Activated CD4-positive, alpha-beta memory T cell treated with anti-CD3 and anti-CD28 coated beads for 36 hours (primary cell): ENCODE measurements at regions of chr15 and their contacts with region 1.

Region 1: GRCh38 chr15:99565299-99566156 is at the start of gene MEF2A:
- DNase-seq: peak; percentile 94
- H3K4me3 Mint-ChIP-seq: peak within 1 kb of the TSS; percentile 96
- H3K27ac Mint-ChIP-seq: peak within 1 kb of the TSS; percentile 97
- H3K4me1 Mint-ChIP-seq: peaks cover 16% of the 10 kb centered on the region
- H3K27me3 Mint-ChIP-seq: no peaks in the 10 kb centered on the region
- total RNA-seq, gene MEF2A: 15.9 to 19.5 TPM

Region 2: DNA sequence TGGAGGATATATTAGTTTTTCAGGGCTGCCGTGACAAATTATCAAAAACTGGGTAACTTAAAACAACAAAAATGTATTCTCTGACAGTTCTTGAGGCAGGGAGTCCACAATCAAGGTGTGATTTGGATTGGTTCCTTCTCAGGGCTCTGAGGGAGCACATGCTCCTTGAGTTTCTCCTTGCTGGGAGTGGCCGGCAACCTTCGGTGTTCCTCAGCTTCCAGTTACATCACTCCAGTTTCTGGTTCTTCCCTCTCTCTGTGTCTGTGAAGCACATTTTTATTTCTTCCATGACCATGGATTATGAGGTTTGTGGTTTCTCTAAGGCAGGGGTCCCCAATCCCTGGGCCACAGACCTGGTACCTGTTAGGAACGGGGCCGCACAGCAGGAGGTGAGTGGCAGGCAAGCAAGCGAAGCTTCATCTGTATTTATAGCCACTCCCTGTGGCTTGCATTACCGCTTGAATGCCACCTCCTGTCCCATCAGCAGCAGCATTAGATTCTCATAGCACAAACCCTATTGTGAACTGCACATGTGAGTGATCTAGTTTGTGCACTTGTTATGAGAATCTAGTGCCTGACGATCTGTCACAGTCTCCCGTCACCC is 289.9 kb before region 1 on chr15:
- CTCF ChIA-PET with region 1: interaction called, 8 read pairs
- POLR2A ChIA-PET with region 1: no interaction called
- intact Hi-C with region 1: loop called (anchors 5 kb)
- DNase-seq: no peak
- H3K4me3 Mint-ChIP-seq: no peak overlapping the region
- H3K27ac Mint-ChIP-seq: no peak overlapping the region
- H3K4me1 Mint-ChIP-seq: peaks cover 24% of the 10 kb centered on the region
- H3K27me3 Mint-ChIP-seq: no peaks in the 10 kb centered on the region

Region 3: DNA sequence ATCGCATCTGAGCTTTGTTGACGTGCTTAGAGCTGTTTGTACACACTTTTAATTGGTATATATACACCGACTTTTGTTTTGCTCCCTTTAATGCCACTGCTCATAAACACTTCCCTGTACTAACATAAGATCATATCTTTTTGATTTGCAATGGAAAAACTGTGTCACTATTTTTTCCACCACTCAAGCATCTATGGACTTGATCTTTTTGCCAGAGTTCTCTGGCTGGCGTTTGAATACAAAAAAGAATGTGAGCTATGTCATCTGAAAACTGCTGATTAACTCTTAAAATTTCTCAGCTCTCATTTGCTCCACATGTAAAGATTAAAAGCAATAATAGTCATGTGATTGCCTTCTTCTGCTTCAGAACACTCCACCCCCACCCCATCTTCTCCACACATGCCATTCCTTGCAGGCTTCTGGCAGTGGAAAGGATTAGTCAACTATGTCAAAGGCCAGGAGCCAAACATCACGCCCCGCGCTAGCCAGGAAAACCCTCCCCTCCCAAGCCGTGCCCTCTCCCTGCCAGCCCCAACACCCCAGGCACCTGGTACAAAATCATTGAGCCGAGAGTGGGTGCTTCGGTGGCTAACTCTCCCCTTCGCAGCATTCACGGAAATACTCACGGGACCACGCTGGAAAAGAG is 123.2 kb before region 1 on chr15:
- CTCF ChIA-PET with region 1: no interaction called
- POLR2A ChIA-PET with region 1: no interaction called
- intact Hi-C with region 1: loop called (anchors 5 kb)
- DNase-seq: no peak
- H3K4me3 Mint-ChIP-seq: no peak overlapping the region
- H3K27ac Mint-ChIP-seq: no peak overlapping the region
- H3K4me1 Mint-ChIP-seq: peaks cover 27% of the 10 kb centered on the region
- H3K27me3 Mint-ChIP-seq: no peaks in the 10 kb centered on the region

Region 4: GRCh38 chr15:99466701-99467337 is 98.7 kb before region 1 on chr15:
- CTCF ChIA-PET with region 1: no interaction called
- POLR2A ChIA-PET with region 1: no interaction called
- intact Hi-C with region 1: no loop called
- DNase-seq: no peak
- H3K4me3 Mint-ChIP-seq: no peak overlapping the region
- H3K27ac Mint-ChIP-seq: no peak overlapping the region
- H3K4me1 Mint-ChIP-seq: no peaks in the 10 kb centered on the region
- H3K27me3 Mint-ChIP-seq: no peaks in the 10 kb centered on the region

Region 5: GRCh38 chr15:99492716-99493115 is 72.8 kb before region 1 on chr15:
- CTCF ChIA-PET with region 1: no interaction called
- POLR2A ChIA-PET with region 1: no interaction called
- intact Hi-C with region 1: no loop called
- DNase-seq: no peak
- H3K4me3 Mint-ChIP-seq: no peak overlapping the region
- H3K27ac Mint-ChIP-seq: no peak overlapping the region
- H3K4me1 Mint-ChIP-seq: peaks cover 5% of the 10 kb centered on the region
- H3K27me3 Mint-ChIP-seq: peaks cover 4% of the 10 kb centered on the region

Region 6: DNA sequence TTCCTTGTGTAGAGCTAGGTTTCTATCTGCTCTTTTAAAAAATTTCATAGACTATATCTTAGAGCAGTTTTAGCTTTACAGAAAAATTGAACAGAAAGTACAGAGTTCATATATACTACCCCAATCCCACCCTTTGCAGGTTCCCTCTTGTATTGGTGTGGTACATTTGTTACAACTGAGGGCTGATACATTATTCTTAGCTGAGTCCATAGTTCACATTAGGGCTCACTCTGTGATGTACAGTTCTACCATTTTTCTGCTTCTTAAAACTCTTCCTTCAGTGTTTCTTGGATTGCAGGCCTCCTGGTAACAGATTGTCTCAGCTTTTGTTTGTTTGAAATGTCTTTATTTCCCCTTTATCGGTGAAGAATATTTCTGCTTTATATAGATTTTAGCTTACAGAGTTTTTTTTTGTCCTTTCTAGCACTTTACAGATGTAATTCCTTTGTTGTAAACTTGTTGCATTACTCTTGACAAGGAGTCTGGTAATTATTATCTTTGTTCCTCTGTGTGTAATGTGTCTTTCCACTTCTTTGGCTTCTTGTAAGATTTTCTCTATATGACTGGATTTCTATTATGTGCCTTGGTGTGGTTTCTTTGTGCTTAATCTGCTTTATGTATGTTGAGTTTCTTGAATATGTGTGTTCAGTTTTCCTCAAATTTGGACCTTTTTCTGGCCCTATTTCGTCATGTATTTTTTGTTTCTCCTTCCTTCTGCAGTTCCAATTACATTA is 25.6 kb after region 1 on chr15:
- CTCF ChIA-PET with region 1: interaction called, 3 read pairs
- POLR2A ChIA-PET with region 1: no interaction called
- intact Hi-C with region 1: loop called (anchors 2 kb)
- DNase-seq: no peak
- H3K4me3 Mint-ChIP-seq: no peak overlapping the region
- H3K27ac Mint-ChIP-seq: no peak overlapping the region
- H3K4me1 Mint-ChIP-seq: peaks cover 36% of the 10 kb centered on the region
- H3K27me3 Mint-ChIP-seq: no peaks in the 10 kb centered on the region

Region 7: DNA sequence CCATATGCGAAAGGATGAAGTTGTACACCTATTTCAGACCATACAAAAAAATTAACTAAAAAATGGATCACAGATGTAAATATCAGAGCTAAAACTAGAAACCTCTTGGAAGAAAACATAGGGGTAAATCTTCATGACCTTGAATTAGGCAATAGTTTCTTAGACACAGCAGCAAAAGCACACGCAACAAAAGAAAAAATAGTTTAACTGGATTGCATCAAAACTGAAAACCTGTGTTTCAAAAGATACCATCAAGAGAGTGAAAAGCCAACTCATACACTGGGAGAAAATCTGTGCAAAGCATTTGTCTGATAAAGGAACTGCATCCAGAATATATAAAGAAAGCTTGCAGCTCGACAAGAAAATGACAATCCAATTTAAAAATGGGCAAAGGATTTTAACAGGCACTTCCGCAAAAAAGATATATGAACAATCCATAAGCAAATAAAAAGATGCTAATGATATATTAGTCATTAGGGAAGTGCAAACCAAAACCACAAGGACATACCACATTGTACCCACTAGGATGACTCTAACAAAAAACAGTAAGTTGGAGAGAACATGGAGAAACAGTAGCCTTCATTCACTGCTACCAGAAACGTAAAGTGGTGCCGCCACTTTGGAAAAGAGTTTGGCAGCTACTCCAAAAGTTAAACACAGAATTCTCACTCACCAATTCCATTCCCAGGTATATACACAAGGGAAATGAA is 513.1 kb after region 1 on chr15:
- CTCF ChIA-PET with region 1: no interaction called
- POLR2A ChIA-PET with region 1: no interaction called
- intact Hi-C with region 1: no loop called
- DNase-seq: no peak
- H3K4me3 Mint-ChIP-seq: no peak overlapping the region
- H3K27ac Mint-ChIP-seq: no peak overlapping the region
- H3K4me1 Mint-ChIP-seq: no peaks in the 10 kb centered on the region
- H3K27me3 Mint-ChIP-seq: no peaks in the 10 kb centered on the region

Region 8: DNA sequence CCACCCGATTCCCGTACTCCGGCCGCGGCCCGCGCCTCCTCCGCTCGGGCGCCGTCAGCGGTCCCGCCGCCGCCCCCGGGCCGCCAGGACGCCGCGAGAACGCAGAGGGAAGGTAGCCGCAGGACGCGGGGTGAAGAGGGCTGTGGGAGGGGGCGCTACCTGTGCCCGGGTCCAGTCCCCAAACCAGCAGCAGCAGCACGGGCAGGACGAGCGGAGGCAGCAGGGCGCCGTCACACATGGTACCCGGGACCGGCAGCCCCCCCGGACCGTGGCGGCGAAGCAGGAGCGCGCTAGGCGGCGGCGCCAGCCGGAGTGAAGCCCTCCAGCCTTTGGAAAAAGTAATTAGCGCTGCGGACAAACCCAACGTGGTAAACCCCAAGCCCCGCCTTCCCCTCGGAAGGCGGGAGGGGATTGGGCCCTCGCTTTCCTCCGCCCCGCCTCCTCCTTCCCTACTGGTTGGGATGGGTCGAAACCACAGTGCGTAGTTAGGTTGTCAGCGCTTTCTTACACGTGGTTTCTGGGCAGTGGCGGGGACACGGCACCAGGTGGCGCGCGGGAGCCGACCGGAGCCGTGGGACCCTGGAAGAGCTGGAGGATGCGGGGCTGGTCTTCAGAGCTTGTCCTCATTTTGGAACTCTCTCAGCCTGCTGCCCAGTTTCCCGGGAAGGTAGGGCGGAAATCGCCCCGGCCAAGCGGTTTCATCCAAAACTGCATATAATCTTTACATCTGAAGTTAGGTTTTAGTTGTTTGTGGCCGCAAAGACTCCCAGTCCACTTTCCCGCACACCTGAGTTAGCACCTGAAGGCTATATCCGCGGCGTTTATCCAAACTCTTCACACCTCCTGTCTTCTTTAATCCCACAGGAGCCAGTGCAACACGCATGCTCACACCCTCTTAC is 776.4 kb after region 1 on chr15 and contains the start of gene ADAMTS17:
- CTCF ChIA-PET with region 1: no interaction called
- POLR2A ChIA-PET with region 1: no interaction called
- intact Hi-C with region 1: loop called (anchors 10 kb)
- DNase-seq: peak; percentile 95
- H3K4me3 Mint-ChIP-seq: peak within 1 kb of the TSS; percentile 54
- H3K27ac Mint-ChIP-seq: no peak within 1 kb of the TSS
- H3K4me1 Mint-ChIP-seq: peaks cover 15% of the 10 kb centered on the region
- H3K27me3 Mint-ChIP-seq: no peaks in the 10 kb centered on the region
- total RNA-seq, gene ADAMTS17: 0.99 to 1.2 TPM